HepG2 (cell line): ENCODE measurements at regions of chr19 and their contacts with region 1.

Region 1: DNA sequence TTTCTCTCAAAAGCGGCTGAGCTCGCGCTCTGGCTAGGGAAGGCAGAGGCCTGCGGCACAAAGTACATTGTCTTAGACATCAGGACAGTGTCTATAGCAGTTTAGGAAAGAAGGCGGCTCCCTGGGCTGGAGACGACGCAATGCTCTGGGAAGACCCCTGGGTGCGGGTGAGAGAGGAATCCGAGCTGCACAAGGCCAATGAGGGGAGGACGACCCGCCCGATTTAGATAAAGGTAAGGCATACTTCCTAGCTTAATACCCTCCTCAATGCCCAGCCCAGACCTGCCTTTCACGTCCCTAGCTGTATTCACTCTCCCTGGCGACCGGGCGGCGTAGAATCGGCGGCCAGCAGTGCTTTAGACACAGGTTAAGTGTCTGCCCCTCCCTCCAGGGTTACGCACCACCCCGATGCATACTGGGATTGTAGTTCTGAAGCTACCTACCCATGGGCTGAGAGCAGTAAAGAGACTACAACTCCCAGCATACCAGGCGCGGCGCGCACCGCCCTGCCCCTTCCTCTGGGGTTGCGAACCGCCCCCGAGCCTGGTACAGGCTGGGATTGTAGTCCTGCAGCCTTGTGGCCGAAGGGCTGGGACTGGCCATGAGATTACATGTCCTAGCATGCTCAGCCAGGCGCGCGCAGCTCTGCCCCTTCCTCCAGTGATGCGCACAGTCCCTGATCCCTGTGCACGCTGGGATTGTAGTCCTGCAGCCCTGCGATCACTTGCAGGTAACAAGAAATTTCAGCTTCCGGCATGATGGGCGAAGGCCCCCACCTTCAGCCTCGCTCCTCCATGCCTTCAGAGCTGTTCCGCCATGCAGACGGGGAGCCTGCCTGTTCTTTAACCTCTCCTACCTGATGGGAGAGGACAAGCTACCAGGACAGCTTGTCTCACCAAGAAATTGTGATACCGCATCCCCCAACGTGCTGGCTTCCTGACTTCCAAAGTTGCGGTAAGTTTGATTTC is 43.4 kb upstream of the ZNF14 start:
- DNase-seq: peak; percentile 98
- ATAC-seq: peak; percentile 98
- H3K4me3 ChIP-seq: peak overlapping the region; percentile 79 to 99 (median 82)
- H3K27ac ChIP-seq: peak overlapping the region; percentile 70
- H3K4me1 ChIP-seq: peaks cover 30% of the 10 kb centered on the region
- H3K27me3 ChIP-seq: no peaks in the 10 kb centered on the region; a peak in 1 of 5 replicates
- CTCF ChIP-seq: peak; percentile 34
- EP300 ChIP-seq: no peak; a peak in 1 of 4 replicates
- POLR2A ChIP-seq: peak; percentile 66 to 83
- RAD21 ChIP-seq: no peak

Region 2: GRCh38 chr19:19652456-19653295 is 123.6 kb before region 1 on chr19:
- CTCF ChIA-PET with region 1: no interaction called
- POLR2A ChIA-PET with region 1: no interaction called
- in situ Hi-C with region 1: no loop called
- intact Hi-C with region 1: no loop called
- DNase-seq: no peak
- ATAC-seq: no peak
- H3K4me3 ChIP-seq: no peak overlapping the region
- H3K27ac ChIP-seq: no peak overlapping the region
- H3K4me1 ChIP-seq: no peaks in the 10 kb centered on the region
- H3K27me3 ChIP-seq: no peaks in the 10 kb centered on the region
- CTCF ChIP-seq: no peak
- EP300 ChIP-seq: no peak
- POLR2A ChIP-seq: no peak
- RAD21 ChIP-seq: no peak

Region 3: GRCh38 chr19:19663256-19664038 is 112.9 kb before region 1 on chr19 and contains the start of gene ATP13A1:
- CTCF ChIA-PET with region 1: no interaction called
- POLR2A ChIA-PET with region 1: interaction called, 25 read pairs
- in situ Hi-C with region 1: no loop called
- intact Hi-C with region 1: loop called (anchors 2 kb)
- DNase-seq: peak; percentile 95
- ATAC-seq: peak; percentile 87
- H3K4me3 ChIP-seq: peak within 1 kb of the TSS; percentile 79 to 99 (median 95)
- H3K27ac ChIP-seq: peak within 1 kb of the TSS; percentile 97
- H3K4me1 ChIP-seq: peaks cover 56% of the 10 kb centered on the region
- H3K27me3 ChIP-seq: no peaks in the 10 kb centered on the region; a peak in 1 of 5 replicates
- CTCF ChIP-seq: 0 out of 2 replicates have a peak, but pooled peaks have one; percentile 13
- EP300 ChIP-seq: no peak; a peak in 1 of 4 replicates
- POLR2A ChIP-seq: peak; percentile 73 to 84
- RAD21 ChIP-seq: peak; percentile 55
- total RNA-seq, gene ATP13A1: 9.8 and 23.2 TPM in 2 replicates

Region 4: GRCh38 chr19:19732579-19733501 is 43.5 kb before region 1 on chr19 and contains the start of gene ZNF14:
- CTCF ChIA-PET with region 1: no interaction called
- POLR2A ChIA-PET with region 1: interaction called, 31 read pairs
- in situ Hi-C with region 1: no loop called
- intact Hi-C with region 1: loop called (anchors 1 kb)
- DNase-seq: peak; percentile 91
- ATAC-seq: peak; percentile 99
- H3K4me3 ChIP-seq: peak within 1 kb of the TSS; percentile 75 to 90 (median 80)
- H3K27ac ChIP-seq: peak within 1 kb of the TSS; percentile 72
- H3K4me1 ChIP-seq: peaks cover 10% of the 10 kb centered on the region
- H3K27me3 ChIP-seq: no peaks in the 10 kb centered on the region; a peak in 1 of 5 replicates
- CTCF ChIP-seq: peak; percentile 33
- EP300 ChIP-seq: no peak
- POLR2A ChIP-seq: peak; percentile 84 to 98
- RAD21 ChIP-seq: no peak
- total RNA-seq, gene ZNF14: 6.2 and 8.8 TPM in 2 replicates

Region 5: GRCh38 chr19:19820774-19821320 is 44.5 kb after region 1 on chr19:
- CTCF ChIA-PET with region 1: no interaction called
- POLR2A ChIA-PET with region 1: no interaction called
- in situ Hi-C with region 1: no loop called
- intact Hi-C with region 1: no loop called
- DNase-seq: no peak
- ATAC-seq: no peak
- H3K4me3 ChIP-seq: no peak overlapping the region
- H3K27ac ChIP-seq: no peak overlapping the region
- H3K4me1 ChIP-seq: no peaks in the 10 kb centered on the region
- H3K27me3 ChIP-seq: no peaks in the 10 kb centered on the region
- CTCF ChIP-seq: no peak
- EP300 ChIP-seq: no peak
- POLR2A ChIP-seq: no peak
- RAD21 ChIP-seq: no peak

Region 6: GRCh38 chr19:19865739-19866481 is 89.6 kb after region 1 on chr19 and contains the start of gene ZNF253:
- CTCF ChIA-PET with region 1: no interaction called
- POLR2A ChIA-PET with region 1: interaction called, 35 read pairs
- in situ Hi-C with region 1: no loop called
- intact Hi-C with region 1: loop called (anchors 5 kb)
- DNase-seq: peak; percentile 95
- ATAC-seq: peak; percentile 97
- H3K4me3 ChIP-seq: peak within 1 kb of the TSS; percentile 80 to 91 (median 90)
- H3K27ac ChIP-seq: peak within 1 kb of the TSS; percentile 99
- H3K4me1 ChIP-seq: peaks cover 35% of the 10 kb centered on the region
- H3K27me3 ChIP-seq: no peaks in the 10 kb centered on the region; a peak in 1 of 5 replicates
- CTCF ChIP-seq: no peak
- EP300 ChIP-seq: no peak
- POLR2A ChIP-seq: peak; percentile 96 to 98
- RAD21 ChIP-seq: no peak; the same call in 1 of the 2 replicates
- total RNA-seq, gene ZNF253: 10.6 and 12.8 TPM in 2 replicates

Region 7: GRCh38 chr19:20051841-20052768 is 275.8 kb after region 1 on chr19:
- CTCF ChIA-PET with region 1: no interaction called
- POLR2A ChIA-PET with region 1: interaction called, 13 read pairs
- in situ Hi-C with region 1: no loop called
- intact Hi-C with region 1: no loop called
- DNase-seq: peak; percentile 92
- ATAC-seq: peak; percentile 99
- H3K4me3 ChIP-seq: peak overlapping the region; percentile 61 to 78 (median 70)
- H3K27ac ChIP-seq: peak overlapping the region; percentile 47
- H3K4me1 ChIP-seq: no peaks in the 10 kb centered on the region
- H3K27me3 ChIP-seq: no peaks in the 10 kb centered on the region
- CTCF ChIP-seq: no peak
- EP300 ChIP-seq: no peak
- POLR2A ChIP-seq: peak; percentile 50 to 55
- RAD21 ChIP-seq: no peak

Region 8: DNA sequence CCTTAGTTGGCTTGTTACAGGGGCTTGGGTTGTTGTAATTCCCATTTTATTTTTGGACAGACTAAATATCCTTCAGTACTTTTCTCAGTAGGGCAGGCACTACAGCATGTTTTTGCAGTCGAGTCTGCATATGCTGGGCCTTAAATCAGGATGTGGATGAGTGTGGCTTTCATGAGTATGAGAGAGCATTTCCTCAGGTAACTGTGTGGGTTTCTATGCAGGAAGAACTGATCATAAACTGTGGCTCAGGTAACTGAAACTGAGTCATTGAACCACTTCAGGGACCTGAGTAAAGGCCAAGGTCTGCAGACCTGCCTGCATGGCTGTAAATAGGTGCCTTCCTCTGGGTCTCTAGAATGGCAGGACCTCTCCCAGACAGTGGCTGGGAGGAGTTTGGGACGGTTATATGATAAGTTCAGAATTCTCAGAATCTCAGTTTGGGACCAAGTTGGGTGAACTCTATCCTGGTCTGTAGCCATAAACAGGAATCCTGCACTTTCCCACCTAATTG is 677.2 kb after region 1 on chr19:
- CTCF ChIA-PET with region 1: no interaction called
- POLR2A ChIA-PET with region 1: no interaction called
- in situ Hi-C with region 1: no loop called
- intact Hi-C with region 1: no loop called
- DNase-seq: no peak
- ATAC-seq: no peak
- H3K4me3 ChIP-seq: no peak overlapping the region
- H3K27ac ChIP-seq: no peak overlapping the region
- H3K4me1 ChIP-seq: no peaks in the 10 kb centered on the region
- H3K27me3 ChIP-seq: no peaks in the 10 kb centered on the region
- CTCF ChIP-seq: no peak
- EP300 ChIP-seq: no peak
- POLR2A ChIP-seq: no peak
- RAD21 ChIP-seq: no peak